HepG2 (cell line): ENCODE measurements at regions of chr16 and their contacts with region 1.

Region 1: DNA sequence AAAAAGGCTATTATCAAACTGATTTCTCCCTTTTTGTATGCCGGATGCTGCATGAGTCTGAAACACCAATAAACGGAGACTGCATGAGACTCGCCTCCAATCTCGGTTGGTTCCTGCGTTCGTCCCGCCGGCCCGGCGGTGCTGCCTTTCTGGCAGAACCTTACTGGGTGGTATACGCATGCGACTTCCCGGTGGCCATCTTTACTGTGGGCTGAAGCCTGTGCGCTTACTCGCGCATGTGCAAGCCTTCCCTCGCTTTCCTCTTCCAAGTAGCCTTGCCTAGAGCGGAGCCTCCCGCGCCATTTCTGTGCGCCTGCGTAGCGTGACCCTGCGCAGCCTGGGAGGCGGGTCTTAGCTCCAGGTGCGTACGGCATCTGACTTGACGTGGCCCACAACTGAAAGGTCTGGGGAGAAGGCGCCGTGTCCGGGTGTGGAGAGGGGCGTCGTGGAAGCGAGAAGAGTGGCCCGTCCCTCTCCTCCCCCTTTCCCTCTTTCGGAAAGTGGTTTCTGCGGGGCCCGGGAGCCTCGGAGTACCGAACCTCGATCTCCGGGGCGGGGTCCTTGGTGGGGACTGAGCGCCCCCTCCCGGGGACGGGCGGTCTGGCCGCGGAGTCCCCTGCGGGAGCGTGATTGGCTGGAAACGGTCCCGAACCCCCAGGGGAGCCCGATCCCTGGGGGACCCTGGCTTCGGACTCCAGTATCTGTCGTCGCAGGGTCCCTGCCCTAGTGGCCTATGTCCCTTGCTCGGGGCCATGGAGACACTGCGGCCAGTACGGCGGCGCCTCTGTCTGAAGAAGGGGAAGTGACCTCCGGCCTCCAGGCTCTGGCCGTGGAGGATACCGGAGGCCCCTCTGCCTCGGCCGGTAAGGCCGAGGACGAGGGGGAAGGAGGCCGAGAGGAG is at the start of gene PAGR1:
- DNase-seq: peak; percentile 99
- ATAC-seq: peak; percentile 63
- H3K4me3 ChIP-seq: peak within 1 kb of the TSS; percentile 86 to 93 (median 88)
- H3K27ac ChIP-seq: peak within 1 kb of the TSS; percentile 83
- H3K4me1 ChIP-seq: peaks cover 80% of the 10 kb centered on the region
- H3K27me3 ChIP-seq: peaks cover 0 to 12% of the 10 kb centered on the region in 2 experiments; a peak in 2 of 5 replicates
- CTCF ChIP-seq: peak; percentile 99
- EP300 ChIP-seq: peak in 1 of 2 experiments; percentile 75; a peak in 2 of 4 replicates
- POLR2A ChIP-seq: peak in 1 of 2 experiments; percentile 85; a peak in 2 of 4 replicates
- RAD21 ChIP-seq: peak; percentile 96
- total RNA-seq, gene PAGR1: 66.4 and 74.5 TPM in 2 replicates

Region 2: DNA sequence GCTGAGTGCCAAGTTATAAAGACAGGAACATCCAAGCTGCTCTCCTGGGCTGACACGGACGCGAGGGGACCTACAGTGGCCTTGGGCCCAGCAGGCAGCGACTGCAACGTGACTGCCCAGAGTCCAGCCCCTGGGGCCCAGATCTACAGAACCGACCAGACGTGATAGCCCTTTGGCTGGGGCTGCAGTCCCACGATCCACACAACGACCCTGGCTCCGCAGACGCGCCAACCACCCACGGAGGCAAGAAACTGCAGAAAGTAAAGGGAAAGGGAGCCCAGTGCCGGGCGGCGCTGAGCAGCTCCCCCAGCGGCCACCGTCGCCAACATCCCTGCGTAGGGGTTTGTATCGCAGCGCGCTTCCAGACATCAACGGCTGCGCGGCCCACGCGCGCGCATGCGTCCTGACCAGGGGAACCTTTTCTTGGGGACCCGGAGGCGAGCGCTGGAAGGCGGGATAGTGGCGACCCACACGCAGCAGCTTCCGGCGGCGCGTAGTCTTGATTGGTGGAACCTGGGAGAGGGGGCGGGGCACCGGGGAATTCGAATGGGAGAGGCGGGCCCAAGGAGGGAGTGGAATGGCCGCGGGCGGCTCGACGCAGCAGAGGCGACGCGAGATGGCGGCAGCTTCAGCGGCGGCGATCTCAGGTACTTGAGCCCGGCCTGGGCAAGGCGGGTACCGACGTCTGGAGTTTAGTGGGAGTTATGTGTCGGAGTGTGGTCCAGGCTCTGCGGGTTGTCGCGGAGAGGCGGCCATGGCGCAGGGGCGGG is 25.7 kb before region 1 on chr16 and contains the start of gene KIF22:
- CTCF ChIA-PET with region 1: interaction called, 4 read pairs
- POLR2A ChIA-PET with region 1: interaction called, 20 read pairs
- in situ Hi-C with region 1: no loop called
- intact Hi-C with region 1: no loop called
- DNase-seq: peak; percentile 98
- ATAC-seq: peak; percentile 95
- H3K4me3 ChIP-seq: peak within 1 kb of the TSS; percentile 77 to 97 (median 84)
- H3K27ac ChIP-seq: peak within 1 kb of the TSS; percentile 83
- H3K4me1 ChIP-seq: peaks cover 62% of the 10 kb centered on the region
- H3K27me3 ChIP-seq: no peaks in the 10 kb centered on the region; a peak in 1 of 5 replicates
- CTCF ChIP-seq: peak; percentile 97
- EP300 ChIP-seq: peak; percentile 29 to 43; a peak in 2 of 4 replicates
- POLR2A ChIP-seq: peak; percentile 89
- RAD21 ChIP-seq: peak; percentile 93
- total RNA-seq, gene KIF22: 103 and 118 TPM in 2 replicates

Region 3: DNA sequence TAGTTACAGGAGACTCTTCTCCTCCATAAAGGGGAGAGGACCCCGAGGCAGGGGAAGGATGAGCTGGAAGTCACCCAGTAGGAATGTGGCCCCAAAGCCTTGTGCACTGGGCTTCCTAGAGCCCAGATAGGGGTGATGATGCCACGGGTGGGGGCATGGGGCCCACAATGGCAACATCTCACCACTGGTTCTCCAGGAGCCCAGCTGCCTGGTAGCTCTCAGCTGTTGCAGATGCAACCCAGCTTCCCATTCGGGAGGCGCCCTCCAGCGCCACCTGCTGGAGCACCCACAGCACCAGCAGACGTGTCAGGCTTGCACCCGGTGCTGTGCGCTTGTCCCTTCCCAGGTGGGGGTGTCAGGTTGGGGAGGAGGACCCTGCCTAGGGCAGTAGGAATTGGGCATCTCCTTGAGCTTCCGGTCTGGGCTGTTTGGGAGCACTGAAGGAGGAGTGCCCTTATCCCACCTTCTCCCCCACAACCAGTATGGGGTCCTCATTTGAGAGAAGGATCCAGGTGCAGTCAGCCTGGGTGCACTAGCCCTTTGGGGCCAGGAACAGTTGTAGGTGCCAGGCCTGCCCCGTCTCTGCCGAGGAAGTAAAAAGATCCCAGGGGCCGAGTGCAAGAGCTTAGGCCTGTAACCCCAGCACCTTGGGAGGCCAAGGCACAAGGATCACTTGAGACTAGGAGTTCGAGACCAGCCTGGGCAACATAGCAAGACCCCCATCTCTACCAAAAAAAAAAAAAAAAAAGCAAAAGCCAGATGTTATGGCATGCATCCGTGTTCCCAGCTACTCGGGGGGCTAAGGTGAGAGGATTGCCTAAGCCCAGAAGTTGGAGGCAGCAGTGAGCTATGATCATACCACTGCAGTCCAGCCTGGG is 32.6 kb after region 1 on chr16:
- CTCF ChIA-PET with region 1: interaction called, 12 read pairs
- POLR2A ChIA-PET with region 1: interaction called, 32 read pairs
- in situ Hi-C with region 1: no loop called
- intact Hi-C with region 1: loop called (anchors 1 kb)
- DNase-seq: peak; percentile 65
- ATAC-seq: peak; percentile 90
- H3K4me3 ChIP-seq: no peak overlapping the region
- H3K27ac ChIP-seq: no peak overlapping the region
- H3K4me1 ChIP-seq: no peaks in the 10 kb centered on the region
- H3K27me3 ChIP-seq: no peaks in the 10 kb centered on the region
- CTCF ChIP-seq: peak; percentile 99
- EP300 ChIP-seq: no peak
- POLR2A ChIP-seq: no peak
- RAD21 ChIP-seq: peak; percentile 98

Region 4: GRCh38 chr16:29973384-29974246 is 157.6 kb after region 1 on chr16 and contains the start of gene TAOK2:
- CTCF ChIA-PET with region 1: no interaction called
- POLR2A ChIA-PET with region 1: interaction called, 16 read pairs
- in situ Hi-C with region 1: no loop called
- intact Hi-C with region 1: no loop called
- DNase-seq: peak; percentile 98
- ATAC-seq: peak; percentile 95
- H3K4me3 ChIP-seq: peak within 1 kb of the TSS; percentile 86 to 99 (median 91)
- H3K27ac ChIP-seq: peak within 1 kb of the TSS; percentile 72
- H3K4me1 ChIP-seq: peaks cover 30% of the 10 kb centered on the region
- H3K27me3 ChIP-seq: no peaks in the 10 kb centered on the region; a peak in 1 of 5 replicates
- CTCF ChIP-seq: peak; percentile 11; the same call in 1 of the 2 replicates
- EP300 ChIP-seq: peak in 1 of 2 experiments; percentile 65; a peak in 2 of 4 replicates
- POLR2A ChIP-seq: peak; percentile 72 to 89
- RAD21 ChIP-seq: peak; percentile 5
- total RNA-seq, gene TAOK2: 27.6 and 43.2 TPM in 2 replicates

Region 5: GRCh38 chr16:30657866-30658730 is 842.1 kb after region 1 on chr16 and contains the start of gene FBRS:
- CTCF ChIA-PET with region 1: no interaction called
- POLR2A ChIA-PET with region 1: no interaction called
- in situ Hi-C with region 1: loop called (anchors 25 kb)
- intact Hi-C with region 1: no loop called
- DNase-seq: peak; percentile 100
- ATAC-seq: peak; percentile 85
- H3K4me3 ChIP-seq: peak within 1 kb of the TSS; percentile 78 to 89 (median 82)
- H3K27ac ChIP-seq: peak within 1 kb of the TSS; percentile 93
- H3K4me1 ChIP-seq: peaks cover 36% of the 10 kb centered on the region
- H3K27me3 ChIP-seq: no peaks in the 10 kb centered on the region; a peak in 1 of 5 replicates
- CTCF ChIP-seq: peak; percentile 97
- EP300 ChIP-seq: peak in 1 of 2 experiments; percentile 22; a peak in 2 of 4 replicates
- POLR2A ChIP-seq: peak; percentile 76 to 86
- RAD21 ChIP-seq: peak; percentile 97
- total RNA-seq, gene FBRS: 10.1 and 16.2 TPM in 2 replicates